ENCODE measurements at regions of chr2 and their contacts with region 1.

Region 1: GRCh38 chr2:196213252-196213980 is 42.0 kb upstream of the STK17B start:
- DNase-seq: no peak
- ATAC-seq: no peak
- H3K4me3 ChIP-seq: no peak overlapping the region
- H3K4me3 Mint-ChIP-seq: no peak overlapping the region
- H3K27ac ChIP-seq: peak overlapping the region in 1 of 2 donors; percentile 27
- H3K27ac Mint-ChIP-seq: peak overlapping the region; percentile 76
- H3K4me1 ChIP-seq: peaks cover 43 to 44% of the 10 kb centered on the region in 2 donors
- H3K4me1 Mint-ChIP-seq: peaks cover 69% of the 10 kb centered on the region
- H3K27me3 ChIP-seq: no peaks in the 10 kb centered on the region
- H3K27me3 Mint-ChIP-seq: no peaks in the 10 kb centered on the region
- CTCF ChIP-seq: no peak

Region 2: GRCh38 chr2:196225213-196225612 is 11.8 kb after region 1 on chr2:
- CTCF ChIA-PET with region 1: interaction called, 6 read pairs
- POLR2A ChIA-PET with region 1: no interaction called
- intact Hi-C with region 1: loop called (anchors 1 kb)
- DNase-seq: no peak
- ATAC-seq: no peak
- H3K4me3 ChIP-seq: no peak overlapping the region
- H3K4me3 Mint-ChIP-seq: no peak overlapping the region
- H3K27ac ChIP-seq: no peak overlapping the region
- H3K27ac Mint-ChIP-seq: no peak overlapping the region
- H3K4me1 ChIP-seq: peaks cover 25 to 28% of the 10 kb centered on the region in 2 donors
- H3K4me1 Mint-ChIP-seq: peaks cover 66% of the 10 kb centered on the region
- H3K27me3 ChIP-seq: no peaks in the 10 kb centered on the region
- H3K27me3 Mint-ChIP-seq: no peaks in the 10 kb centered on the region
- CTCF ChIP-seq: no peak

Region 3: GRCh38 chr2:196233021-196233804 is 19.8 kb after region 1 on chr2:
- CTCF ChIA-PET with region 1: interaction called, 6 read pairs
- POLR2A ChIA-PET with region 1: interaction called, 3 read pairs
- intact Hi-C with region 1: loop called (anchors 1 kb)
- DNase-seq: peak; percentile 26
- ATAC-seq: peak; percentile 23
- H3K4me3 ChIP-seq: peak overlapping the region in 1 of 5 experiments; percentile 17
- H3K4me3 Mint-ChIP-seq: peak overlapping the region; percentile 36
- H3K27ac ChIP-seq: peak overlapping the region; percentile 76 to 82
- H3K27ac Mint-ChIP-seq: peak overlapping the region; percentile 94
- H3K4me1 ChIP-seq: peaks cover 72 to 77% of the 10 kb centered on the region in 2 donors
- H3K4me1 Mint-ChIP-seq: peaks cover 71% of the 10 kb centered on the region
- H3K27me3 ChIP-seq: no peaks in the 10 kb centered on the region
- H3K27me3 Mint-ChIP-seq: no peaks in the 10 kb centered on the region
- CTCF ChIP-seq: no peak